Heart right ventricle (tissue), 16 donors: ENCODE measurements at regions of chr1 and their contacts with region 1.

Region 1: DNA sequence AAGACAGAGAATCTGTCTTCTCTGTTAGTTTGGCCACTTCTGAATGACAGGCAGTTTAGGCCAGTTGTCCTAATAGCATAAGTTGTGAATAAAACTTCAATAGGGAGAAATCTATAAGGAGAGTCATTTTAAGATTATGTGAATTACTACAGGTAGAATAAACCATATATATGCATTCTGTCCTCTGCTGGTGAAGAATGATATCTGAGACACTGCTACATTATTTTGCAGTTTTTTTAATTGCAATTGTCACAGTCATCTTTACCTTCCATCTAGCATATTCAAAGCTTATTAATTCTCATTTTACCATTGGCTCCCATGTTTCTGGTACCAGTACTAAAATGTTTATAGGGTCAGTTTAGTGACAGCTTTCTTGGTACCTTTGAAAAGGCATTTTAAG is 519.6 kb upstream of the DEPDC1 start:
- DNase-seq: no peak
- ATAC-seq: no peak
- H3K4me3 ChIP-seq: no peak overlapping the region
- H3K27ac ChIP-seq: no peak overlapping the region
- H3K4me1 ChIP-seq: no peaks in the 10 kb centered on the region
- H3K27me3 ChIP-seq: no peaks in the 10 kb centered on the region
- CTCF ChIP-seq: no peak

Region 2: DNA sequence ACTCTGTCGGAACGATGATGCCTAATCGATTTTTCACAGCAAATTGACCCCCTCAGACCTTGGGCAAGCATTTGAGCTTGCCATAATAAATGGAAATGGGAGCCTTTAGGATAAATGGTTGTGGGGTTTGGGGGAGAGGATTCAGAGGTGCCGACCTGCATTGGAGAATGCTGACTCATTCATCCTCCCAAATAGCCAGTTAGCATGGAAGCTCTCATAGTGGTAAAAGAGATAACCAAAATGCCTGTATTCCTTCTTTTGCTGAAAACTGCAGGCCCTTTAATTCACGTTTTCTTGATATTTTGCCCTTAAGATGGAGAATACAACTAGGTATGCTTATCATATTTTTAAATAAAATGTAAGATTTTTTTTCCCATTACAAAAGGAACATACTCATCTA is 127.0 kb before region 1 on chr1:
- intact Hi-C with region 1: no loop called
- DNase-seq: no peak
- ATAC-seq: no peak
- H3K4me3 ChIP-seq: no peak overlapping the region
- H3K27ac ChIP-seq: no peak overlapping the region
- H3K4me1 ChIP-seq: no peaks in the 10 kb centered on the region
- H3K27me3 ChIP-seq: no peaks in the 10 kb centered on the region
- CTCF ChIP-seq: no peak

Region 3: GRCh38 chr1:69777971-69778370 is 761.5 kb after region 1 on chr1:
- intact Hi-C with region 1: loop called in 1 of 10 experiments (anchors 5 kb)
- DNase-seq: no peak
- ATAC-seq: no peak
- H3K4me3 ChIP-seq: no peak overlapping the region
- H3K27ac ChIP-seq: no peak overlapping the region
- H3K4me1 ChIP-seq: no peaks in the 10 kb centered on the region
- H3K27me3 ChIP-seq: peaks cover 0 to 3% (median 0%) of the 10 kb centered on the region in 7 donors
- CTCF ChIP-seq: no peak